MCF 10A (cell line): ENCODE measurements at regions of chr12 and their contacts with region 1.

Region 1: DNA sequence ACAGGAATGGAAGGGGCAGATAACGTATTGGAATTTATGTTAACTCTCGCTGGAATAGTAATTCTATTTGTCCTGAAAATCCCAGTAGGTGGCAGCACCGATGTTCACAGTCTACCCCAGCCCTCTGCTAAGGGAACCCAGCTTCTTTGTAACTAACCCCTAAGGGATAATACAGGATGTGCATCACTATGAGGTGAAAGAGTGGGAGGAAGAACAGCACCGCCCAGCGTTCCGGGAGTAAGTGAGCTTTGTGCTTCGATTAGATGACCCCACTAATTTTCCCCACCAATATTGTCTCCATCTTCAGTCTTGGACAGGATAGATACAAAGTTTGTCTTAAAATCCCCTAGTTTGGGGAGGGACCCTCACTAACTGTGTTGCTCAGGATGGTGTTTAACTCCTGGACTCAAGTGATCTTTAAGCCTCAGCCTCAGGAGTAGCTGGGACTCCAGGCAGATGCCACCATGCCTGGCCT is 2.7 kb downstream of the SLC2A3 start:
- DNase-seq: peak; percentile 92
- H3K4me3 Mint-ChIP-seq: no peak overlapping the region
- H3K27ac Mint-ChIP-seq: no peak overlapping the region
- H3K4me1 Mint-ChIP-seq: peaks cover 4% of the 10 kb centered on the region
- H3K27me3 Mint-ChIP-seq: no peaks in the 10 kb centered on the region
- CTCF ChIP-seq: peak; percentile 55

Region 2: GRCh38 chr12:7479771-7480170 is 453.5 kb before region 1 on chr12:
- CTCF ChIA-PET with region 1: no interaction called
- POLR2A ChIA-PET with region 1: no interaction called
- intact Hi-C with region 1: no loop called
- DNase-seq: no peak
- H3K4me3 Mint-ChIP-seq: no peak overlapping the region
- H3K27ac Mint-ChIP-seq: no peak overlapping the region
- H3K4me1 Mint-ChIP-seq: no peaks in the 10 kb centered on the region
- H3K27me3 Mint-ChIP-seq: peaks cover 3% of the 10 kb centered on the region
- CTCF ChIP-seq: no peak

Region 3: GRCh38 chr12:7769999-7770398 is 163.3 kb before region 1 on chr12:
- CTCF ChIA-PET with region 1: no interaction called
- POLR2A ChIA-PET with region 1: no interaction called
- intact Hi-C with region 1: no loop called
- DNase-seq: no peak
- H3K4me3 Mint-ChIP-seq: no peak overlapping the region
- H3K27ac Mint-ChIP-seq: no peak overlapping the region
- H3K4me1 Mint-ChIP-seq: peaks cover 6% of the 10 kb centered on the region
- H3K27me3 Mint-ChIP-seq: no peaks in the 10 kb centered on the region
- CTCF ChIP-seq: no peak

Region 4: GRCh38 chr12:7859552-7859951 is 73.7 kb before region 1 on chr12:
- CTCF ChIA-PET with region 1: interaction called, 51 read pairs
- POLR2A ChIA-PET with region 1: interaction called, 8 read pairs
- intact Hi-C with region 1: loop called (anchors 1 kb)
- DNase-seq: no peak
- H3K4me3 Mint-ChIP-seq: no peak overlapping the region
- H3K27ac Mint-ChIP-seq: peak overlapping the region; percentile 20
- H3K4me1 Mint-ChIP-seq: peaks cover 15% of the 10 kb centered on the region
- H3K27me3 Mint-ChIP-seq: no peaks in the 10 kb centered on the region
- CTCF ChIP-seq: no peak

Region 5: DNA sequence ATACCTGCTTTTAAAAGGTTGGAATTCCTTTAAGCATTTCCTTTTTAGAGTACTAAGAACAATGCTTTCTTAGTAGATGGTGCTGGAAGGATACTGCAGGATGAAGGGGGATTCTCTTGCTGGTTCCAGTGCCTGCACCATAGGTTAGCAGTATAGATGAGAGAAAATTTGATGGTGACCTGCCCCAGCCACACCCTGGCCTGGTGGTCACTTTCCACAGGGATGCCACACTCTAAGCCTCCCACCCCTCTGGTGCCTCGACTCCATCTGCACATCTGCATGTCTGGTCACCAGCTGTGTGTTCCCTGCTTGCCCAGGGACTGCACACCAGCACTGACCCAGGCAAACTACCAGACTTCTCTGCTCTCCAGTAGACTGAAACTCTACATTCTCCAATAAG is 16.4 kb before region 1 on chr12:
- CTCF ChIA-PET with region 1: interaction called, 14 read pairs
- POLR2A ChIA-PET with region 1: interaction called, 4 read pairs
- intact Hi-C with region 1: no loop called
- DNase-seq: no peak
- H3K4me3 Mint-ChIP-seq: no peak overlapping the region
- H3K27ac Mint-ChIP-seq: peak overlapping the region; percentile 71
- H3K4me1 Mint-ChIP-seq: no peaks in the 10 kb centered on the region
- H3K27me3 Mint-ChIP-seq: no peaks in the 10 kb centered on the region
- CTCF ChIP-seq: no peak

Region 6: DNA sequence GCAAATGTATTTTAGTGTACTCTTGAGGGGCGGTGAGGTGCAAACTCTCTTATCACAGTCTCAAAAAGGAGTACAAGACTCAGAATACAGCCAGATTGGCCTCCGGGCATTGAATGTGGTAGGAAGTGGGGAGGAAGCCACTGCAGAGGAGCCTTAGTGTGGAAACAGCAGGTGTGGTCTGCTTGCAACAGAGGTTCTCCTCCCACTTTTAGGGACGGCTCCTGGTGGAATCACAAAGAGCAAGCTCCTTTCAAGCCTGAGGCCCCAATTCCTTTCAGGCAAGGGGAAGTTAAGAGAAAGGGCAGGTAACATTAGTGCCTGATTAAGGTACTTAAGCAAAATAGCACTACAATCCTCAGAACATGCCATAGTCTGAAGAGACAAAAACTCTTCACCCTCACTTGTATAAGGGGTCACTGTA is 26.4 kb after region 1 on chr12:
- CTCF ChIA-PET with region 1: interaction called, 115 read pairs
- POLR2A ChIA-PET with region 1: interaction called, 25 read pairs
- intact Hi-C with region 1: loop called (anchors 1 kb)
- DNase-seq: peak; percentile 96
- H3K4me3 Mint-ChIP-seq: peak overlapping the region; percentile 60
- H3K27ac Mint-ChIP-seq: peak overlapping the region; percentile 92
- H3K4me1 Mint-ChIP-seq: peaks cover 27% of the 10 kb centered on the region
- H3K27me3 Mint-ChIP-seq: no peaks in the 10 kb centered on the region
- CTCF ChIP-seq: no peak

Region 7: GRCh38 chr12:7995266-7995963 is 62.1 kb after region 1 on chr12:
- CTCF ChIA-PET with region 1: interaction called, 70 read pairs
- POLR2A ChIA-PET with region 1: no interaction called
- intact Hi-C with region 1: loop called (anchors 1 kb)
- DNase-seq: peak; percentile 77
- H3K4me3 Mint-ChIP-seq: no peak overlapping the region
- H3K27ac Mint-ChIP-seq: no peak overlapping the region
- H3K4me1 Mint-ChIP-seq: no peaks in the 10 kb centered on the region
- H3K27me3 Mint-ChIP-seq: no peaks in the 10 kb centered on the region
- CTCF ChIP-seq: peak; percentile 69